Natural killer cell (primary cell): ENCODE measurements at regions of chr3 and their contacts with region 1.

Region 1: DNA sequence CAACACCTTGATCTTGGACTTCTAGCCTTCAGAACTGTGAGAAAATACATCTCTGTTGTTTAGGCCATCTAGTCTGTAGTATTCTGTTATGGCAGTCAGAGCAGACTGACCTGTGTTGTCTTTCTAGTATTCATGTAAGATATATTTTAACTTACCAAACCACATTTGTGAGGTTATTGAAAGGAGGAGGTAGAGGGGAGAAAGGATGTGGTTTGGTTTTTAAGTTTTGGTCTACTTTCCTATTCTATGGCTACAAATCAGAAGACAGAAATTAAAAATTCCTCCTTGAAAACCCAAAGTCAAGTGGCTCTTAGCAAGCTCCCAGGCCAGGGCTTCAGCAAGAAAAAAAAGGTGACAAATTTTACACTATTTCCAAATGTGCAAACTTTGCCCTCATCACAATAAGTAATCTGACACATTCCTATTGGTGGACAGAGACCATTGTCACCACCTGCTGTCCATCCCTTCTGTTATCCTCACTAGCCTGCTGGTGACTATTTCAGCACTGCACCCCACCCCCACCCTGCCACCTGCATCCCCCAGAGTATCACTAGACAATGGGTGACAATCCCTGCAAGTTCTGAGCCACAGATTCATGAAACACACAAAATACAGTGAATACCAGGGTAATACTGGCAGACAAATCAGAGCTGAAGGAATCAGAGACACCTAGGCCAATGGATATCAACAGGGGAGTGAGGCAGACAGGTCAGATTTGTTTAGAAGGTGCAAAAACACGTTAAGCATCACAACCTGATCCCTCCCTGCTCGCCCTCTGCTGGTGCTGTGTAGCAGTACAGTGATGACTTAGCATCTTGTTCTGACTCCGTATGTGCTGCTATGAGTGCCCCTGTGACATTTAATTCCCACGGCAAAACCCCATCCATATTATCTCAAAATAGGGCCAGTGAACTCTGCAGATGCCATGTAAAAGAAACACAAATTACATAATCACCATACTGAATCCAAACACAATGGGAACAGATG is 79.0 kb upstream of the DCLK3 start:
- DNase-seq: peak; percentile 37 to 70
- ATAC-seq: peak; percentile 77 to 85 (median 81)
- H3K4me3 ChIP-seq: no peak overlapping the region
- H3K4me3 Mint-ChIP-seq: peak overlapping the region; percentile 75
- H3K27ac ChIP-seq: peak overlapping the region; percentile 49
- H3K27ac Mint-ChIP-seq: peak overlapping the region; percentile 84 to 90
- H3K4me1 ChIP-seq: peaks cover 26% of the 10 kb centered on the region
- H3K4me1 Mint-ChIP-seq: peaks cover 57 to 61% of the 10 kb centered on the region in 2 donors
- H3K27me3 ChIP-seq: no peaks in the 10 kb centered on the region
- H3K27me3 Mint-ChIP-seq: no peaks in the 10 kb centered on the region
- CTCF ChIP-seq: peak; percentile 70

Region 2: GRCh38 chr3:35965908-35966307 is 877.5 kb before region 1 on chr3:
- intact Hi-C with region 1: loop called (anchors 5 kb)
- DNase-seq: peak in 1 of 2 donors; percentile 9
- ATAC-seq: no peak
- H3K4me3 ChIP-seq: no peak overlapping the region
- H3K4me3 Mint-ChIP-seq: no peak overlapping the region
- H3K27ac ChIP-seq: no peak overlapping the region
- H3K27ac Mint-ChIP-seq: no peak overlapping the region
- H3K4me1 ChIP-seq: no peaks in the 10 kb centered on the region
- H3K4me1 Mint-ChIP-seq: peaks cover 9 to 13% of the 10 kb centered on the region in 2 donors
- H3K27me3 ChIP-seq: no peaks in the 10 kb centered on the region
- H3K27me3 Mint-ChIP-seq: no peaks in the 10 kb centered on the region
- CTCF ChIP-seq: no peak